ENCODE measurements at regions of chr3 and their contacts with region 1.

Region 1: GRCh38 chr3:50245831-50246516 is 10.0 kb downstream of the GNAI2 start:
- DNase-seq: peak; percentile 89 to 94 (median 93)
- H3K4me3 ChIP-seq: peak overlapping the region; percentile 41
- H3K27ac ChIP-seq: peak overlapping the region; percentile 64 to 82
- H3K4me1 ChIP-seq: peaks cover 31% of the 10 kb centered on the region
- H3K27me3 ChIP-seq: no peaks in the 10 kb centered on the region
- CTCF ChIP-seq: peak; percentile 96 to 98 (median 97)
- EP300 ChIP-seq: no peak
- POLR2A ChIP-seq: no peak

Region 2: DNA sequence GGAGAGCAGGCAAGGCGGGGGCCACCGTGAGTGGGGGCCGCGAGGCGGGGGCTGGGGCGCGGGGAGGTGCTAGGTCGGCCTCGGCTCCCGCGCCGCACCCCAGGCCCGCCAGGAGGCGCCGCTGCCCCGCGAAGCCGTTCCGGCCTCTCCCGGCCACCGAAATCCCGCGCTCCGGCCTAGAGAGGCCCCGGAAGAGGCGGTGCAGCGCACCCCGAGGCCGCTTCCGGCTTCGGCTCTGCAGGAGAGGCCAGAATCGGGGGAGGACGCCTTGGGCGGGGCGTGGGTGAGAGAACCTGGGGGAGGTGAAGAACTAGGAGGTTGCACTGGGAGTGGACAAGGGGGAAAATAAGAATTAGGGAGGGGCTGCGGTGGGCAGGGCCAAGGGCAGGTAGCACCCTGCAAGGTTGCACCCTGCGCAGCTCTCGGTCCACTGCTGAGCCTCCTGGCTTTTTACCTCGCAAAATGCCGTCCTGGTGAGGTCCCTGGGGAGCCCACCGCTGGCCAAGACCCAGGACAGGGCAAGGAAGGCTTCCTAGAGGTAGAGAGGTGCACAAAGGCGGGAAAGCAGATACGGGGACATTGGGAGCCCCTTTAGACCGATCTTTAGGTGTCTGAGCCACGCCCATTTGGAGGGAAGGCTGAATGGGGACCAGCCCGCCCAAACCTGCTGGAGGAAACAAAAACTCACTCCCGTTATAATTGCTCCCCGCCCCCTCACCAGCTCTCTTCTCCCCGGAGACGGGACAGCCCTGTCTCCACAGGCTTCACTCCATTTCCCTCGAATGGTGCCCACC is 18.4 kb before region 1 on chr3:
- intact Hi-C with region 1: loop called in 1 of 4 experiments (anchors 1 kb)
- DNase-seq: peak; percentile 91 to 95 (median 93)
- H3K4me3 ChIP-seq: peak overlapping the region; percentile 70
- H3K27ac ChIP-seq: peak overlapping the region in 1 of 2 donors; percentile 18
- H3K4me1 ChIP-seq: peaks cover 8% of the 10 kb centered on the region
- H3K27me3 ChIP-seq: no peaks in the 10 kb centered on the region
- CTCF ChIP-seq: peak; percentile 82 to 95 (median 94)
- EP300 ChIP-seq: no peak
- POLR2A ChIP-seq: no peak

Region 3: DNA sequence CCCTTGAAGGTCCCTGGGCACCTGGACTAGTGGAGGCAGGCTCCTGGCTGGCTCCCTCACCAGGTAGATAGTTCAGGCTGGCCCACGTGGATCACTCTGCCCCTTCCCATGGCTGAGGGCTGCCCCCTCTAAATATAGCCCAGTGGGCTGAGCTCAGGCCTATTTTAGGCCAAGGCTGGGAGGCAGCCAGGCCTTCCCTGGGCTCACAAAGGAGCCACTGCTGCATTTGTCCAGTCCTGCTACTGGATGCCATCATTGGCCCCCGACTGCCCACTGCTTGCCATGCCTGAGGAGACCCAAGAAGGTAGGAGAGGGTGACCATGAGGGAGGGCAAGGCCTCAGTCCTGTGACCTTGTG is 32.9 kb after region 1 on chr3 and contains the start of gene LSMEM2:
- intact Hi-C with region 1: loop called in 1 of 4 experiments (anchors 1 kb)
- DNase-seq: peak in 2 of 5 donors; percentile 21 to 28
- H3K4me3 ChIP-seq: no peak within 1 kb of the TSS
- H3K27ac ChIP-seq: no peak within 1 kb of the TSS
- H3K4me1 ChIP-seq: no peaks in the 10 kb centered on the region
- H3K27me3 ChIP-seq: no peaks in the 10 kb centered on the region
- CTCF ChIP-seq: no peak
- EP300 ChIP-seq: no peak
- POLR2A ChIP-seq: no peak
- total RNA-seq, gene LSMEM2: 0.42 to 1.4 (median 0.76) TPM in 5 of 7 donors, not detected in the others

Region 4: GRCh38 chr3:50568947-50569749 is 323.2 kb after region 1 on chr3 and contains the start of gene HEMK1:
- intact Hi-C with region 1: no loop called
- DNase-seq: peak; percentile 98 to 99 (median 99)
- H3K4me3 ChIP-seq: peak within 1 kb of the TSS; percentile 71
- H3K27ac ChIP-seq: peak within 1 kb of the TSS; percentile 76 to 84
- H3K4me1 ChIP-seq: peaks cover 13% of the 10 kb centered on the region
- H3K27me3 ChIP-seq: no peaks in the 10 kb centered on the region
- CTCF ChIP-seq: peak in 1 of 3 donors; percentile 24
- EP300 ChIP-seq: no peak
- POLR2A ChIP-seq: peak; percentile 83
- total RNA-seq, gene HEMK1: 6.8 to 35.3 (median 24.7) TPM

Measured in ovary (tissue), 10 donors.